CD4-positive, alpha-beta T cell (primary cell): ENCODE measurements at regions of chr1 and their contacts with region 1.

Region 1: DNA sequence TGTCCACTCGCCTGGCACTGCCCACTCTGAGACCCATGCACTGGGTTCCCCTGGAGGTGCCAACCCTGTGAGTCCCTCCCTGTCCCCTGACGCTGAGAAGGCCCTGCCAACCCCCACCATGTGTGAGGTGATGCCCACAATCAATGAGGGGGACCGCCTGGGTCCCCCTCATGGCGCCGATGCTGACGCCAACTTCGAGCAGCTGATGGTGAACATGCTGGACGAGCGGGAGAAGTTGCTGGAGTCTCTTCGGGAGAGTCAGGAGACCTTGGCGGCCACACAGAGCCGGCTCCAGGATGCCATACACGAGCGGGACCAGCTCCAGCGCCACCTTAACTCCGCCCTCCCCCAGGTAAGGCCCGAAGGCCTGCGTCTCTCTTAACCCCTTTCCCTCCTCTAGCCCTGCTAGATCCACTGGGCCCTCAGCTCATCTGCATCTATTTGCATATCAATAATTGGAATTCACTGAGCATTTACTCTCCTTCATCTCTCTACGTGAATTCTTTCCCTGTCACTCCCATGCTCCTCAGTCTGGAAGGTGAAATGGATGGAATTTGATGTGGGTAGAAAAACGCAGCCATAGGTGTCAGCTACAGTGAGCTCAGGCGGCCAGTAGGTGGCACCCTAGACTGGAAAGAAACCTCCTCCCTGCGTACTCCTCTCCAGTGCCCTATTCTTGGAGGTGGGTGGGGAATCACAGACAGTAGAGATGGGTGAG is 12.8 kb downstream of the PPFIA4 start:
- DNase-seq: peak; percentile 39 to 80 (median 53)
- ATAC-seq: peak; percentile 94
- H3K4me3 ChIP-seq: no peak overlapping the region
- H3K4me3 Mint-ChIP-seq: no peak overlapping the region
- H3K27ac ChIP-seq: no peak overlapping the region
- H3K27ac Mint-ChIP-seq: no peak overlapping the region
- H3K4me1 ChIP-seq: no peaks in the 10 kb centered on the region
- H3K4me1 Mint-ChIP-seq: no peaks in the 10 kb centered on the region
- H3K27me3 ChIP-seq: peaks cover 4 to 6% of the 10 kb centered on the region in 2 experiments
- H3K27me3 Mint-ChIP-seq: peaks cover 6% of the 10 kb centered on the region
- CTCF ChIP-seq: peak; percentile 81

Region 2: GRCh38 chr1:203170614-203171320 is 131.7 kb after region 1 on chr1:
- CTCF ChIA-PET with region 1: no interaction called
- POLR2A ChIA-PET with region 1: no interaction called
- intact Hi-C with region 1: loop called in 1 of 2 experiments (anchors 2 kb)
- DNase-seq: no peak
- ATAC-seq: no peak
- H3K4me3 ChIP-seq: no peak overlapping the region
- H3K4me3 Mint-ChIP-seq: no peak overlapping the region
- H3K27ac ChIP-seq: no peak overlapping the region
- H3K27ac Mint-ChIP-seq: no peak overlapping the region
- H3K4me1 ChIP-seq: no peaks in the 10 kb centered on the region
- H3K4me1 Mint-ChIP-seq: no peaks in the 10 kb centered on the region
- H3K27me3 ChIP-seq: no peaks in the 10 kb centered on the region
- H3K27me3 Mint-ChIP-seq: no peaks in the 10 kb centered on the region
- CTCF ChIP-seq: no peak

Region 3: GRCh38 chr1:203216274-203217138 is 177.5 kb after region 1 on chr1:
- CTCF ChIA-PET with region 1: interaction called, 25 read pairs
- POLR2A ChIA-PET with region 1: no interaction called
- intact Hi-C with region 1: loop called in 1 of 2 experiments (anchors 1 kb)
- DNase-seq: peak; percentile 13 to 78 (median 39)
- ATAC-seq: peak; percentile 68
- H3K4me3 ChIP-seq: no peak overlapping the region
- H3K4me3 Mint-ChIP-seq: no peak overlapping the region
- H3K27ac ChIP-seq: no peak overlapping the region
- H3K27ac Mint-ChIP-seq: no peak overlapping the region
- H3K4me1 ChIP-seq: peaks cover 7% of the 10 kb centered on the region
- H3K4me1 Mint-ChIP-seq: peaks cover 6% of the 10 kb centered on the region
- H3K27me3 ChIP-seq: peaks cover 0 to 8% of the 10 kb centered on the region in 2 experiments
- H3K27me3 Mint-ChIP-seq: peaks cover 16% of the 10 kb centered on the region
- CTCF ChIP-seq: peak; percentile 81